Activated CD8-positive, alpha-beta T cell treated with anti-CD3 and anti-CD28 coated beads, Interleukin-2, amount 10 ng/mL, durations not matched to agents 7 days and 5 days (primary cell): ENCODE measurements at regions of chr15 and their contacts with region 1.

Region 1: GRCh38 chr15:65832549-65833364 is 36.5 kb upstream of the RAB11A start:
- DNase-seq: peak; percentile 72
- ATAC-seq: peak; percentile 77
- H3K4me3 Mint-ChIP-seq: peak overlapping the region; percentile 67
- H3K27ac Mint-ChIP-seq: peak overlapping the region; percentile 95
- H3K4me1 Mint-ChIP-seq: peaks cover 62% of the 10 kb centered on the region
- H3K27me3 Mint-ChIP-seq: no peaks in the 10 kb centered on the region

Region 2: DNA sequence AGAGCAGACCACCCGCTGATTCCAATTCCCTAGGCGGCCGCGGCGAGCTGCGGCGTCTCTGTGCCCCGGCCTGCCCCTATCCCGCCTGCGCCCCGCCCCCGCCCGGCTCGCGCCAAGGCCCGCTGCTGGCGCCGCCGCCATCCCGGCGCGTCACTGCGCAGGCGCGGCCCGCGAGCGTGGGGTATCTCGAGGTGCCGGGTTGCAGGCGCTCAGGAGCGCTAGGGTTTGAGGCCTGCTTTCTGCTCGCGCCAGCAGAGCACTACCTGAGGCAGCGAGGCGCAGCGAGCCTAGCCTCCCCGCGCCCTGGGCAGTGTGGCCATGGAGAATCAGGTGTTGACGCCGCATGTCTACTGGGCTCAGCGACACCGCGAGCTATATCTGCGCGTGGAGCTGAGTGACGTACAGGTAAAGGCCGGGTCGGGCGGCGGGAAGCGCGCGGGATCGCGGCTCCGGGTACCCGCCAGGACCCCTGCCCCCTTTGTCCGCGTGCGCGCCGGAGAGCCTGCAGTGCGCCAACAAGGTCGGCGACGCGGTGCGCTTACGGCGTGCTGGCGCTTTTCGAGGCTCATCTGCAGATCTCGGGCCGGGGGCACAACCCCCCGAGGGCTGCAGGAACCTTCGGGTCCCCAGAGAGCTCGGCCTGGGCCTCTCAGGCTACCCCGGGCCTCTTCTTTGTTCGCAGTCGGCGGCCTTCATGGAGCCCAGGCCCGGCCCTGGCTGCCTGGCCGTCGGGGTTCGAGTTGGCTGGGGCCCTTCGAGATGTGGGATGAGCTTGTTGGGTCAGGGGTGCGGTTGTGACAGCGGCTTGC is 302.2 kb before region 1 on chr15 and contains the start of gene HACD3:
- CTCF ChIA-PET with region 1: no interaction called
- POLR2A ChIA-PET with region 1: no interaction called
- DNase-seq: peak; percentile 90
- ATAC-seq: peak; percentile 99
- H3K4me3 Mint-ChIP-seq: peak within 1 kb of the TSS; percentile 83
- H3K27ac Mint-ChIP-seq: peak within 1 kb of the TSS; percentile 89
- H3K4me1 Mint-ChIP-seq: peaks cover 31% of the 10 kb centered on the region
- H3K27me3 Mint-ChIP-seq: no peaks in the 10 kb centered on the region
- total RNA-seq, gene HACD3: 34.8 to 36.5 TPM

Region 3: DNA sequence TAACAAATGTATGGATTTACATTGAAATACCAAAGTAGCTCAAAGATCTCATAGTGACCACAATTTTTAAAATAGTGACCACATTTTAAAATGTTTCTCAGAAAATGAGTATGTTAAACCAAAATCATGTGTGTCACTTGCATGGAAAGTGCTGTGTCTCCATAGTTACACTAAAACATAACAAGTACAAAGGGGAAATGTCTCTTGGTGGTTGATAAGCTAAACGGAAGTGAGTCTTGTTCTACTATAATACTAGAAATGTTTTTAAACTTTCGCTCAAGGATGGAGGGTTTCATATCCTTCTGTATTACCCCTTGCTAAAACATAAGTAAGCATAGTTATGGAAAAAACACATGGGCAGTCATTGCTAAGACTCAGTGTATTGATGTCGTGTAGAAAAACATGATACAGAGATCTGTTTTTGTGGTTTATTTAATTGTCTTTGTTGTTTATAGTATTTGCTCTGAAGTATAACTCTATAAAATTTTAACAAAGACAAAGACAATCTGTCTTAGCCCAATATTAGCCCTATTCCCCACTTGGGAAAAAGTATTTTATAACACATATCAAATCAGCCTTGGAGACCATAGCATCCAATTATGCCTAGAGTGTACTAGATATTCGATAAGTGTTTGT is 13.7 kb before region 1 on chr15:
- CTCF ChIA-PET with region 1: interaction called, 68 read pairs
- POLR2A ChIA-PET with region 1: interaction called, 16 read pairs
- DNase-seq: peak; percentile 42
- ATAC-seq: peak; percentile 84
- H3K4me3 Mint-ChIP-seq: peak overlapping the region; percentile 50
- H3K27ac Mint-ChIP-seq: peak overlapping the region; percentile 93
- H3K4me1 Mint-ChIP-seq: peaks cover 58% of the 10 kb centered on the region
- H3K27me3 Mint-ChIP-seq: no peaks in the 10 kb centered on the region

Region 4: GRCh38 chr15:65862682-65863081 is 29.9 kb after region 1 on chr15:
- CTCF ChIA-PET with region 1: interaction called, 12 read pairs
- POLR2A ChIA-PET with region 1: no interaction called
- DNase-seq: peak; percentile 80
- ATAC-seq: peak; percentile 96
- H3K4me3 Mint-ChIP-seq: no peak overlapping the region
- H3K27ac Mint-ChIP-seq: no peak overlapping the region
- H3K4me1 Mint-ChIP-seq: peaks cover 10% of the 10 kb centered on the region
- H3K27me3 Mint-ChIP-seq: peaks cover 6% of the 10 kb centered on the region